ENCODE measurements at regions of chr19 and their contacts with region 1.

Region 1: DNA sequence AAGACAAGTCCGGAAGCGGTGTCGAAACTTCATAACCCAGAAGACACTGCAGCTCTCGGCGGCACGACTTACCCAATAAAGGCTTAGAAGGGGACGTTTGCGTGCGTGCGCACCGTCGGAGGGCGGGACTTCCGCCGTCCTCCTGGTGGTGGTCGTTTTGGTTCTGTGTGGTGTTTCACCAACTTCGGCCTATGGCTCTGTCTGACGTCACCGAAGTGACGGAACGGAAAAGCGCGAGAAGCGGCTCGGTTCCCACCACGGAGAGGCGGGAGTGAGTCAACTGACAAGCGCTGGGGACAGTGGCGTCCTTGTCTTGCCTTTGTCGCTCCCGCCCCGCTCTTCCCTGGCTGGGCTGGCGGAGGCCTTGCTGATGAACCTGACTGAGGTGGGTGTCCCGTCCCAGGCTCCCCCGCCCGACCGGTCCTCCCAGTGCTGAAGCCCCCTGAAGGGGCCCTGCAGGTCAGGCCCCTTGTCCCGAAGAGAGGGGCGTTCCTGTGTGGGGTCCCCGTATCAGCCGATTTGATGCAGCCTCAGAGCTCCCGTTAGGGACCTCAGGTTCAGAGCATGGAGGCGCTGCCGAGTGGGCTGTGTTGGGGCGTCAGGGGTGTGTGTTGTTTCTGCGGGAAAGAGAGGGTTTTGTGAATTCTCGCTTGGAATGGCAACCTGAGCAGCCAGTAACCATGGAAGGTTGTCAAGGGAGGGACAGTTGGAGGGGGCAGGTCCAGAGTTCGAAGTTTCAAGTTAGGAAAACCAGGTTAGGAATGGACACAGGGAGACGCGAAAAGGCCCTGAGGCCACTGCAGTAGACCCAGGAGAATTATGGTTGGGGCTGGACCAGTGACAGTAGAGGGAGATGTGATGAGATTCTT is at the start of gene ZNF548:
- DNase-seq: peak; percentile 99
- ATAC-seq: peak; percentile 90 to 98 (median 92)
- H3K4me3 ChIP-seq: peak within 1 kb of the TSS; percentile 81
- H3K4me3 Mint-ChIP-seq: peak within 1 kb of the TSS; percentile 94
- H3K27ac ChIP-seq: peak within 1 kb of the TSS; percentile 95
- H3K27ac Mint-ChIP-seq: peak within 1 kb of the TSS; percentile 97 to 98
- H3K4me1 ChIP-seq: peaks cover 23% of the 10 kb centered on the region
- H3K4me1 Mint-ChIP-seq: peaks cover 37 to 48% of the 10 kb centered on the region in 2 donors
- H3K27me3 ChIP-seq: no peaks in the 10 kb centered on the region
- H3K27me3 Mint-ChIP-seq: peaks cover 0 to 4% of the 10 kb centered on the region in 2 donors
- CTCF ChIP-seq: no peak
- total RNA-seq, gene ZNF548: 75.5 to 104 (median 96.9) TPM

Region 2: GRCh38 chr19:57410877-57411671 is 21.1 kb after region 1 on chr19 and contains the start of gene ZNF17:
- intact Hi-C with region 1: loop called (anchors 1 kb)
- DNase-seq: peak; percentile 84 to 96
- ATAC-seq: peak; percentile 99 to 100 (median 100)
- H3K4me3 ChIP-seq: peak within 1 kb of the TSS; percentile 86
- H3K4me3 Mint-ChIP-seq: peak within 1 kb of the TSS; percentile 94
- H3K27ac ChIP-seq: peak within 1 kb of the TSS; percentile 62
- H3K27ac Mint-ChIP-seq: peak within 1 kb of the TSS; percentile 84
- H3K4me1 ChIP-seq: peaks cover 18% of the 10 kb centered on the region
- H3K4me1 Mint-ChIP-seq: peaks cover 29 to 37% of the 10 kb centered on the region in 2 donors
- H3K27me3 ChIP-seq: no peaks in the 10 kb centered on the region
- H3K27me3 Mint-ChIP-seq: no peaks in the 10 kb centered on the region
- CTCF ChIP-seq: no peak
- total RNA-seq, gene ZNF17: 13.0 to 15.0 (median 13.3) TPM

Measured in natural killer cell (primary cell).